ENCODE measurements at regions of chr19 and their contacts with region 1.

Region 1: GRCh38 chr19:17859533-17860330 is at the start of gene RPL18A:
- DNase-seq: peak; percentile 100
- H3K4me3 ChIP-seq: peak within 1 kb of the TSS; percentile 74
- H3K27ac ChIP-seq: peak within 1 kb of the TSS; percentile 85
- H3K4me1 ChIP-seq: peaks cover 12% of the 10 kb centered on the region
- H3K27me3 ChIP-seq: no peaks in the 10 kb centered on the region
- CTCF ChIP-seq: peak; percentile 95
- total RNA-seq, gene RPL18A: 1,852 and 1,889 TPM in 2 replicates

Region 2: GRCh38 chr19:17035842-17036424 is 823.8 kb before region 1 on chr19:
- CTCF ChIA-PET with region 1: no interaction called
- POLR2A ChIA-PET with region 1: interaction called, 16 read pairs
- intact Hi-C with region 1: no loop called
- DNase-seq: peak; percentile 55
- H3K4me3 ChIP-seq: no peak overlapping the region
- H3K27ac ChIP-seq: no peak overlapping the region
- H3K4me1 ChIP-seq: no peaks in the 10 kb centered on the region
- H3K27me3 ChIP-seq: peaks cover 4% of the 10 kb centered on the region
- CTCF ChIP-seq: no peak

Region 3: GRCh38 chr19:17441241-17442021 is 418.3 kb before region 1 on chr19:
- CTCF ChIA-PET with region 1: interaction called, 7 read pairs
- POLR2A ChIA-PET with region 1: no interaction called
- intact Hi-C with region 1: loop called (anchors 5 kb)
- DNase-seq: peak; percentile 51
- H3K4me3 ChIP-seq: no peak overlapping the region
- H3K27ac ChIP-seq: no peak overlapping the region
- H3K4me1 ChIP-seq: no peaks in the 10 kb centered on the region
- H3K27me3 ChIP-seq: peaks cover 1% of the 10 kb centered on the region
- CTCF ChIP-seq: peak; percentile 61

Region 4: GRCh38 chr19:17703824-17704463 is 155.8 kb before region 1 on chr19:
- CTCF ChIA-PET with region 1: no interaction called
- POLR2A ChIA-PET with region 1: no interaction called
- intact Hi-C with region 1: loop called (anchors 5 kb)
- DNase-seq: peak; percentile 67
- H3K4me3 ChIP-seq: no peak overlapping the region
- H3K27ac ChIP-seq: no peak overlapping the region
- H3K4me1 ChIP-seq: no peaks in the 10 kb centered on the region
- H3K27me3 ChIP-seq: peaks cover 1% of the 10 kb centered on the region
- CTCF ChIP-seq: peak; percentile 89

Region 5: GRCh38 chr19:17841810-17842662 is 17.7 kb before region 1 on chr19:
- CTCF ChIA-PET with region 1: interaction called, 16 read pairs
- POLR2A ChIA-PET with region 1: interaction called, 12 read pairs
- intact Hi-C with region 1: no loop called
- DNase-seq: peak; percentile 94
- H3K4me3 ChIP-seq: peak overlapping the region; percentile 47
- H3K27ac ChIP-seq: peak overlapping the region; percentile 66
- H3K4me1 ChIP-seq: peaks cover 16% of the 10 kb centered on the region
- H3K27me3 ChIP-seq: no peaks in the 10 kb centered on the region
- CTCF ChIP-seq: no peak

Region 6: DNA sequence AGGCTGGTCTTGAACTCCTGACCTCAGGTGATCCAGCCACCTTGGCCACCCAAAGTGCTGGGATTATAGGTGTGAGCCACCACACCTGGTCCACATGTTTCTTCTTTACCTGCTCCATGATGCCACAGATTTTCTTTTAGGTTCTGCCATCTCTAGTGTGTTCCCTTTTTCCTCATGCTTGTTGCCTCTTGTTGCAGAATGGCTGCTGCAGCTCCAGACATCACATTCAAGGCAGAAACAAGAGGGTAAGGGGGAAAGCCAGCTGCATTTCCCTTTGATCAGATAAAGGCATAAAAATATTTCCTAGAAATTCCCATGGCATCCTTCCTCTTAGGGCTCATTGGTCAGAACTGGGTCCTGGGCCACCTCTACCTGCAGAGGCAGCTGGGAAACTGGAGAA is 60.8 kb after region 1 on chr19:
- CTCF ChIA-PET with region 1: no interaction called
- POLR2A ChIA-PET with region 1: interaction called, 12 read pairs
- intact Hi-C with region 1: no loop called
- DNase-seq: no peak
- H3K4me3 ChIP-seq: no peak overlapping the region
- H3K27ac ChIP-seq: no peak overlapping the region
- H3K4me1 ChIP-seq: no peaks in the 10 kb centered on the region
- H3K27me3 ChIP-seq: no peaks in the 10 kb centered on the region
- CTCF ChIP-seq: no peak

Region 7: DNA sequence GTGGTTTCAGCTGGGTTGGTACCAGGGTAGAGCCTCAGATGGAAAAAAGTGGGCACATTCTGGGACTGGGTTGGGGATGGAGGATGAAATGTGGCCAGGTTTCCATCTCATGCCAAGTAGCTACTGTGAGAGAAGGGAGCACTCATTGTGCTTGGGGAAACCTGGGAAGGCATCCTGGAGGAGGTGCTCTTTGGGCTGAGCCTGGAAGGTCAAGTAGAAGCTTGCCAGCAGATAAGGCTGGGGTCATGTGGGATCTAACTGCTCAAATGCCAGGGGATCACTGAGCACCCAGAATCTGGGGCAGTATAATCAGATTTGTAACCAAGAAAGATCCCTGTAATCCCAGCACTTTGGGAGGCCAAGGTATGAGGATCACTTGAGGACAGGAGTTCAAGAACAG is 98.2 kb after region 1 on chr19:
- CTCF ChIA-PET with region 1: interaction called, 22 read pairs
- POLR2A ChIA-PET with region 1: no interaction called
- intact Hi-C with region 1: no loop called
- DNase-seq: no peak
- H3K4me3 ChIP-seq: no peak overlapping the region
- H3K27ac ChIP-seq: no peak overlapping the region
- H3K4me1 ChIP-seq: peaks cover 28% of the 10 kb centered on the region
- H3K27me3 ChIP-seq: no peaks in the 10 kb centered on the region
- CTCF ChIP-seq: no peak